ENCODE measurements at regions of chr5 and their contacts with region 1.

Region 1: GRCh38 chr5:132190161-132190817 is 37.4 kb downstream of the P4HA2 start:
- DNase-seq: no peak
- ATAC-seq: peak; percentile 93

Region 2: GRCh38 chr5:132227485-132228240 is 37.4 kb after region 1 on chr5 and contains the start of gene P4HA2:
- intact Hi-C with region 1: loop called (anchors 5 kb)
- DNase-seq: peak; percentile 89
- ATAC-seq: peak; percentile 85
- total RNA-seq, gene P4HA2: 88.7 TPM

Region 3: GRCh38 chr5:132354381-132355139 is 164.3 kb after region 1 on chr5:
- intact Hi-C with region 1: no loop called
- DNase-seq: no peak
- ATAC-seq: no peak